ENCODE measurements at regions of chr7 and their contacts with region 1.

Region 1: GRCh38 chr7:117385340-117386109 is 41.8 kb downstream of the ASZ1 start:
- DNase-seq: no peak
- ATAC-seq: peak; percentile 90
- H3K4me3 ChIP-seq: no peak overlapping the region
- H3K27ac ChIP-seq: no peak overlapping the region
- H3K4me1 ChIP-seq: no peaks in the 10 kb centered on the region
- H3K27me3 ChIP-seq: no peaks in the 10 kb centered on the region
- CTCF ChIP-seq: peak; percentile 25 to 68 (median 46); a peak in 4 of 6 replicates
- EP300 ChIP-seq: no peak
- POLR2A ChIP-seq: no peak
- RAD21 ChIP-seq: peak; percentile 75

Region 2: DNA sequence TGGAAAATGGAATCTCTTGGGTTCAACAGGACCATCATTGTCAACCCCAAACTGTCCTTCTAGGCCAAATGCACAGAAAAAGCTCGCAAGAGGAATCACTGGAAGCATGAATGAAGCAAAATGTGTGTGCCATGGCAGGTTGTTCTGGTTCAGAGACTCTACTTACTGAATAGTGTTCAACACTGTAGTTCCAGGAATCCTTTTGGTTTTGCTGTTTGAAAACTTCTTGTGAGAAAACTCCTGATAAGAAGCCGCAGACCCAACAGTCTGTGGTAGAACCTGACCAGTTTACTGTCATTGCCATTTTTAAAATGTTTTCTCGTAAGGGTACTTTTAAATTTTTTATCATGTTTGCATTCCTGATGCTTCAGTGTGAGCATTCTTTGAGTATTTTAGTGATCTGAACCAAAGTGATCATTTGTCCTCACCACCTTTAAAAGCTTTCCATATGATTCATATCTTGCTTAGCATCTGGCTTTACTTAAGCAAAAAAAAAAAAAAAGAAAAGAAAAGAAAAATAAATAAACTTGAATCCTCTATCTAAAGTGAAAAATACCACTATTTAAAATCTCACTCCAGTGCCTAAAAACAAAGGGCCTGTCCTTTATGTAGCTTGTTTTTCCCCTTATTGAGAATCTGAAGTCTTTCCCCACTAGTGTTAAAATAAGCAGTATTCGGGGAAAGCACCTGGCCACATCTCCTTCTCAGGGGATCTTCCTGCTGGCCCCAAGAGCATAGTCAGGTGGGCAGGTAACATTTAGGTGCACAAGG is 155.1 kb before region 1 on chr7:
- CTCF ChIA-PET with region 1: interaction called, 5 read pairs
- POLR2A ChIA-PET with region 1: no interaction called
- RAD21 ChIA-PET with region 1: interaction called, 12 read pairs
- SMC1A ChIA-PET with region 1: interaction called, 5 read pairs
- in situ Hi-C with region 1: no loop called
- intact Hi-C with region 1: loop called (anchors 5 kb)
- DNase-seq: peak; percentile 66
- ATAC-seq: peak; percentile 92
- H3K4me3 ChIP-seq: no peak overlapping the region
- H3K27ac ChIP-seq: peak overlapping the region; percentile 74
- H3K4me1 ChIP-seq: peaks cover 12% of the 10 kb centered on the region
- H3K27me3 ChIP-seq: no peaks in the 10 kb centered on the region
- CTCF ChIP-seq: no peak
- EP300 ChIP-seq: peak; percentile 25 to 64; a peak in 1 of 4 replicates
- POLR2A ChIP-seq: no peak
- RAD21 ChIP-seq: no peak

Region 3: GRCh38 chr7:117251687-117252086 is 133.8 kb before region 1 on chr7:
- CTCF ChIA-PET with region 1: interaction called, 4 read pairs
- POLR2A ChIA-PET with region 1: no interaction called
- RAD21 ChIA-PET with region 1: interaction called, 10 read pairs
- SMC1A ChIA-PET with region 1: interaction called, 3 read pairs
- in situ Hi-C with region 1: no loop called
- intact Hi-C with region 1: no loop called
- DNase-seq: peak; percentile 35
- ATAC-seq: peak; percentile 84
- H3K4me3 ChIP-seq: no peak overlapping the region
- H3K27ac ChIP-seq: no peak overlapping the region
- H3K4me1 ChIP-seq: peaks cover 4% of the 10 kb centered on the region
- H3K27me3 ChIP-seq: no peaks in the 10 kb centered on the region
- CTCF ChIP-seq: no peak
- EP300 ChIP-seq: peak in 1 of 2 experiments; percentile 49; a peak in 1 of 4 replicates
- POLR2A ChIP-seq: no peak
- RAD21 ChIP-seq: no peak

Region 4: DNA sequence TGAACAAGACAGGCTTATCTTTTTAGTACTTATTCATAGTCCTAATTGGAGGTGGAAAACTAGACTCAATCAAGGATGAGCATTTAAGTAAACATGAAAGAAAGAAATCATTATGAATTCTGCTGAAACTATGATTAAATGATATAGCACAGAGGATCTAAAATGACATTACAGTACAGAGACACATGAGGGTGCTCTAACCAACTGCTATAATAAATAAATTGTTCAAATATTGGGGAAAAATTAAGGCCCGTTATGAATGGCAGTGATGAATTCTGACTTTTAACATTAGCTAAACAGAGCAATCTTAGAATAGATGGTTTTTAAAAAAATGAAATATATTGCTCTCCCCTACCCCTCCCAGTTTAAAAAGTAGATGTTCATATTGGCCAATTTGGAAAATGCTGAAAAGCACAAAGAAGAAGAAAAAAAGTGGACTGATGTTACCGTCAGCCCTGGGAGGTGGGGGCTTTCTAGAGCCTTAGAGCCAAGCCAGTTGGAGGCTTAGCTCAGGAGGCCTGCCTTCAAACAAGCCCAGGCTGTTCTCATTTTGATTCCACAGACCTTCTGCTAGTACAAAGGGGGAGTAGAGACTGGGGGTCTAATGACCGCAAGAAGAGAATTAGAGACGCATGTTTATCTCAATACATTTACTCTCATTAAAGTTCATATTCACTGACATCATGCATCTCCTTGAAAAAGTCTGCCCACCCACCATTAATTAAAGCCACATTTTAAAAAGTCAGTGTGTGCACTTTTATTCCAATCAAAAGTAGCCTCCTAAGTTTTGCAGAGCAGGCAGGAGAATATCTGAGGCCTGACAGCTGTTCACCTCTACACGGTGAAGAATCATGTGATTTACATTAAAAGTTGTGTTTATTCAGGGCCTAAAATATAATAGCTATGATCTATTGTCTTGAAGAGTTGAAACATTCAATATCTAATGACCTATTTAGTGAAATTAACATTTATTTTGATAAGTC is 72.6 kb before region 1 on chr7:
- CTCF ChIA-PET with region 1: interaction called, 44 read pairs
- POLR2A ChIA-PET with region 1: no interaction called
- RAD21 ChIA-PET with region 1: interaction called, 32 read pairs
- SMC1A ChIA-PET with region 1: interaction called, 49 read pairs
- in situ Hi-C with region 1: no loop called
- intact Hi-C with region 1: loop called (anchors 2 kb)
- DNase-seq: no peak
- ATAC-seq: peak; percentile 48; the same call in 2 of the 3 replicates
- H3K4me3 ChIP-seq: no peak overlapping the region
- H3K27ac ChIP-seq: no peak overlapping the region
- H3K4me1 ChIP-seq: no peaks in the 10 kb centered on the region
- H3K27me3 ChIP-seq: no peaks in the 10 kb centered on the region
- CTCF ChIP-seq: peak in 1 of 3 experiments; percentile 47; a peak in 1 of 6 replicates
- EP300 ChIP-seq: no peak
- POLR2A ChIP-seq: no peak
- RAD21 ChIP-seq: peak; percentile 56

Region 5: DNA sequence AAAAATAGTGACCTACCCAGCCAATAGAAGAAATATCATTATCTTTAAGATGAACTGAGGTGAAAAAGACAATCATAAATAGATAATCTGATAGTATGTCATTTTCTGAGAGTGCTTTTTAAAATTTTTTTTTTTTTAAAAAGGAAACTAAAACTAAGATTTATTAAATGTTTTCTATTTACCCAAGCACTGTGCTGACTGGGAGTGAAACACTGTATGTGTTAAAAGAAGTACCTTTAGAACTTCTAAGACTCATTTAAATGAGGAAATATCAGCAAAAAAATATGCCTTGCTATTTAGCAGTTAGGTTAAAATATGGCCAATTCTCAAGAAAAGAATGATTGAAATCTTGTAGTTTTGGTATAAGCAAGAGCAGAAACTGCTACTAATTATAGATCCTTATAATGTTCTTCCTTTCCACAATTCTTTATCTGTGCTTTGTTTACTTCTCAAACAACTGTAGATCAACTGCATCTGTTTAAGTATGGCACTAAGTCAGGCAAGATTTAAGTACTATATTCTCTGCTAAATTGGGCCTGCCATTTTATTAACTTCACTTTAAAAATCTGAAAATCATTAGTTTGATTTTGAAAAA is 23.1 kb before region 1 on chr7:
- CTCF ChIA-PET with region 1: interaction called, 4 read pairs
- POLR2A ChIA-PET with region 1: no interaction called
- RAD21 ChIA-PET with region 1: interaction called, 3 read pairs
- SMC1A ChIA-PET with region 1: interaction called, 29 read pairs
- in situ Hi-C with region 1: no loop called
- intact Hi-C with region 1: no loop called
- DNase-seq: no peak
- ATAC-seq: peak; percentile 80
- H3K4me3 ChIP-seq: no peak overlapping the region
- H3K27ac ChIP-seq: no peak overlapping the region
- H3K4me1 ChIP-seq: no peaks in the 10 kb centered on the region
- H3K27me3 ChIP-seq: no peaks in the 10 kb centered on the region
- CTCF ChIP-seq: no peak
- EP300 ChIP-seq: no peak
- POLR2A ChIP-seq: no peak
- RAD21 ChIP-seq: no peak

Region 6: GRCh38 chr7:117375380-117375779 is 10.1 kb before region 1 on chr7:
- CTCF ChIA-PET with region 1: interaction called, 22 read pairs
- POLR2A ChIA-PET with region 1: no interaction called
- RAD21 ChIA-PET with region 1: interaction called, 12 read pairs
- SMC1A ChIA-PET with region 1: interaction called, 19 read pairs
- in situ Hi-C with region 1: no loop called
- intact Hi-C with region 1: no loop called
- DNase-seq: no peak
- ATAC-seq: no peak
- H3K4me3 ChIP-seq: no peak overlapping the region
- H3K27ac ChIP-seq: no peak overlapping the region
- H3K4me1 ChIP-seq: no peaks in the 10 kb centered on the region
- H3K27me3 ChIP-seq: no peaks in the 10 kb centered on the region
- CTCF ChIP-seq: peak in 1 of 3 experiments; percentile 22; a peak in 2 of 6 replicates
- EP300 ChIP-seq: no peak
- POLR2A ChIP-seq: no peak
- RAD21 ChIP-seq: 0 out of 2 replicates have a peak, but pooled peaks have one; percentile 22

Measured in GM12878 (cell line).